Activated CD4-positive, alpha-beta memory T cell treated with anti-CD3 and anti-CD28 coated beads for 36 hours (primary cell): ENCODE measurements at regions of chr18 and their contacts with region 1.

Region 1: DNA sequence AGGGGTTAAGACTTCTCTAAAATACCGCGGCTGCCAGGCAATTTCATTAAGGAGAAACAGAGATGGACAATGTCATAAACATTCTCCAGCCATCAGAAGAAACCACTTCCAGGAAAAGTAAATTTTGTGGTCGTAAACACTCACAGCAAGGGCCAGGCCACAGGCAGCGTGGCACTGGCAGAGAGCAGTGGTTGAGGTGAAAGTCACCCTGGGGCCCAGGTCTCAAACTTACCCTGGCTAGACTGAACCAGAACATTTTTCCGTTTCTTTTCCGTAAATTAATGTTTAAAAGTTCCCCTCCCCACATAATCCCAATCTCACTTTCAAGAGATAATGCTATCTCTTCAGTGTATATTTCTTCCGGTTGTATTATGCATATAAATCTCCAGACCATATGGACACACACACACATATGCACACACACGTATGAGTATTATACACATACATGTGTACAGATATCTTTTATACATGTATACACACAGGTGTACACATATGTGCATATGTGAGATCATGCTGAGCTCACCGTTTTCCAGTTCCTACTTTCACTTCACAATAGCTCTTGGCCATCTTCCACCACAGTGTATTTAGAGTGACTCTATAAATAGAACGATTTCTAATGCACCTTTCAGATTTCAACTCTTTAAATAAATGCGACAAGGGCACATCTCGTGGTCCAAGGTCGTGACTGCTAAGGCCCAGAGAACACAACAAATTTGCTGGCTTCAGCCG is 90.1 kb downstream of the MALT1 start:
- DNase-seq: peak; percentile 41
- H3K4me3 Mint-ChIP-seq: no peak overlapping the region
- H3K27ac Mint-ChIP-seq: no peak overlapping the region
- H3K4me1 Mint-ChIP-seq: peaks cover 18% of the 10 kb centered on the region
- H3K27me3 Mint-ChIP-seq: peaks cover 13% of the 10 kb centered on the region

Region 2: DNA sequence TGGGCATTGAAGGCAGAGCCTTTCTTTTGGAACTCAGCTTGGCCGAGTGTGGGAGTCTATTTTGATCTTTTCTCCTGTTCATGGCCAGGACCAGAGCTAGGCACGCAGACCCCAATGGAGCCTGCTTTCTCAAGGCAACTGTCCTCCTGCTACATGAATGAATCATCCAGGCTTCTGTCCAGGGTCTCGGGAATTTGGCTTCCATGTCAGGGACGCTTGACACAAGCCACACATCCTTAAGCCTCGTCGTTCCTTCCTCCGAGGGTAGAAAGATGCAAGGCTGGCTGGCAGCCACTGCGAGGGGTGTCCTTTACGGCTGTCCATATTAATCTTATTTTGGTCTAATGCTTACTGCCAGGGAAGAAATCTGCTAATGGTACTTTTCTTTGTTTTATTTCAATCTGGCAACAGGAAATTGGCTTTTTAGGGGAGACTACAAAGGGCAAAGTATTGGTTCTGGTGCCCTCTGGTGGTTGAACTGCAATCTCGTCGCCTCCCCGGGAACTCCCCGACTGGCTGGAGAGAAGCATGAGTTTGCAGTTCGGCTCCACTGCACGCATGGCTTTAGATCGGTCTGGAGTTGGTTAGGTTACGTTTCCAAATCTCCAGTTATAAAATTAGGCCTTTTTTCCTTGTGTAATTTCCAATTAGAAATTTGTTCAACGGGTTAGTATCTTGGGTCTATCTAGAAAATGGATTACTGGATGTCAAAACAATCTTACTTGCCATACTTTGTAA is 267.7 kb before region 1 on chr18:
- CTCF ChIA-PET with region 1: interaction called, 41 read pairs
- POLR2A ChIA-PET with region 1: no interaction called
- intact Hi-C with region 1: loop called (anchors 1 kb)
- DNase-seq: peak; percentile 85
- H3K4me3 Mint-ChIP-seq: no peak overlapping the region
- H3K27ac Mint-ChIP-seq: peak overlapping the region; percentile 11
- H3K4me1 Mint-ChIP-seq: peaks cover 6% of the 10 kb centered on the region
- H3K27me3 Mint-ChIP-seq: peaks cover 30% of the 10 kb centered on the region

Region 3: GRCh38 chr18:58657494-58657893 is 103.9 kb before region 1 on chr18:
- CTCF ChIA-PET with region 1: interaction called, 14 read pairs
- POLR2A ChIA-PET with region 1: no interaction called
- intact Hi-C with region 1: no loop called
- DNase-seq: no peak
- H3K4me3 Mint-ChIP-seq: no peak overlapping the region
- H3K27ac Mint-ChIP-seq: peak overlapping the region; percentile 64
- H3K4me1 Mint-ChIP-seq: peaks cover 57% of the 10 kb centered on the region
- H3K27me3 Mint-ChIP-seq: no peaks in the 10 kb centered on the region

Region 4: GRCh38 chr18:58748899-58749595 is 12.4 kb before region 1 on chr18:
- CTCF ChIA-PET with region 1: interaction called, 47 read pairs
- POLR2A ChIA-PET with region 1: no interaction called
- intact Hi-C with region 1: no loop called
- DNase-seq: no peak
- H3K4me3 Mint-ChIP-seq: no peak overlapping the region
- H3K27ac Mint-ChIP-seq: no peak overlapping the region
- H3K4me1 Mint-ChIP-seq: no peaks in the 10 kb centered on the region
- H3K27me3 Mint-ChIP-seq: no peaks in the 10 kb centered on the region

Region 5: GRCh38 chr18:59286341-59286740 is 524.9 kb after region 1 on chr18:
- CTCF ChIA-PET with region 1: no interaction called
- POLR2A ChIA-PET with region 1: no interaction called
- intact Hi-C with region 1: no loop called
- DNase-seq: no peak
- H3K4me3 Mint-ChIP-seq: no peak overlapping the region
- H3K27ac Mint-ChIP-seq: no peak overlapping the region
- H3K4me1 Mint-ChIP-seq: no peaks in the 10 kb centered on the region
- H3K27me3 Mint-ChIP-seq: peaks cover 36% of the 10 kb centered on the region